Left ventricle myocardium inferior (tissue), 1 donor: ENCODE measurements at regions of chr1 and their contacts with region 1.

Region 1: DNA sequence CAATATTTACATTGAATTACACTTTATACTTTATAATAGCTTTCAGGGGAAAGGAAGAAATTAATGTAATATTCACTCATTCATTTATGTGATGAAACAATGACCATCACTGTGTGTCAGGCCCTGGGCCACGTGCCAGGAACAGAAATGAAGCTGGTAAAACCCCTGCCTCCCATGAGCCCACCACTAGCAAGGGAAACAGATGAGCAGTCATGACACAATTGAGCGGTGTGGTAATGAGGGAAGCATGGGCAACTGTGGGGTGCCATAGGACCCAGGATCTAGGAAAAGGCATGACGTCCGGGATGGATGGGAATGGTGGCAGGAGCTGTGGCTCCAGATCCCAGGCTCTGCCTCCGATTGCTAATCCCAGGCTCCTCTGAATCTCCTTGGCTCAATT is 17.0 kb upstream of the SLC5A9 start:
- DNase-seq: no peak
- H3K4me3 ChIP-seq: no peak overlapping the region
- H3K27ac ChIP-seq: no peak overlapping the region
- H3K4me1 ChIP-seq: no peaks in the 10 kb centered on the region
- H3K27me3 ChIP-seq: peaks cover 7% of the 10 kb centered on the region
- CTCF ChIP-seq: no peak

Region 2: DNA sequence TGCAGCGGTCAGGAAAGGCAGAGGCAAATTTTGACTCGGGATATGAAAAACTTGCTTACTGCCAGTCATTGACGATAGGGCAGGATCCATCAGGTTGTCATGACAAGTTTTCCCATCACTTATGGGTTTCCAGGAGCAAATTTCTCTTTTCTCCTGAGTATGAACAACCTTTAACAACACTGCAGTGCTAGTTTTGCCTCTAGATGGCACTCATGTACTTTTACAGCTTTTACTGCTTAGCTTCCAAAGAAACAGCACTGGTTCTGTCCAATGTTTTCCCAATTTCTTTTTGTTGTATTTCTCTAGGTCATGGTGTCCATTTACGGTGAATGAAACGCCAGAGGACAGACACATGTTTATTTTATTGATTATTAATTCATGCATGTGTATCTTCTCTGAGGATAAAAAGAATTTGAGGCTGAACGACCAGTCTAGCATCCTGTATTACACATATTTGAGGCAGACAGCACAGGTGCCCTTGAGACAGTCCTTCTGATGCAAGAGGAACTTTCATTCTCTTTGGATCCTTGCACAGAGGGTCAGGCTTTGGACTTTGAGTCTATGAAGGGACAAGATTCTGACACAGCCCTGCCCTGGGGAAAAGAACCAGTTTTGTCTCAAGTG is 96.0 kb before region 1 on chr1:
- intact Hi-C with region 1: loop called (anchors 2 kb)
- DNase-seq: no peak
- H3K4me3 ChIP-seq: no peak overlapping the region
- H3K27ac ChIP-seq: no peak overlapping the region
- H3K4me1 ChIP-seq: no peaks in the 10 kb centered on the region
- H3K27me3 ChIP-seq: peaks cover 5% of the 10 kb centered on the region
- CTCF ChIP-seq: peak; percentile 92